ENCODE measurements at regions of chr2 and their contacts with region 1.

Region 1: DNA sequence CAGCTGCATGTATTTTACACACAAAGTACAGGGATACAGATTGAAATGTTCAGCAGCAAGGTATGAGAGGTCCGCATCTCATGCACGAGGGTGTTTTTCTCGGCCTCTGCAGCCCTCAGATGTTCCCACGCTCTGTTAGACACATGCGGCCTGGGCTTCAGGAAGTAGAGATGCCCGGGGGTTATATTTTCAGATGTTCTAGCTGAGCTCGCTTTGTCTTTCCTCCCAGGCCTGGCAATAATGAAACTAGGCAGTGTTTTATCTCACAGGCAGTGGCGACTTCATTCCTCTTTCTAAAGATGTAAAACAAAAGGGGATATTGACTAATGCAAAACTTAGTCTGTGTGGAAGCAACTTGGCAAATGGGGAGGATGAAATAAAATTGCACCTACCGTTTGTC is 190.7 kb downstream of the GBX2 start:
- DNase-seq: no peak
- H3K4me3 ChIP-seq: no peak overlapping the region
- H3K27ac ChIP-seq: no peak overlapping the region
- H3K4me1 ChIP-seq: no peaks in the 10 kb centered on the region
- H3K27me3 ChIP-seq: no peaks in the 10 kb centered on the region
- CTCF ChIP-seq: no peak
- EP300 ChIP-seq: no peak
- POLR2A ChIP-seq: no peak
- RAD21 ChIP-seq: no peak

Region 2: GRCh38 chr2:235988271-235989015 is 11.0 kb after region 1 on chr2:
- CTCF ChIA-PET with region 1: interaction called, 15 read pairs
- POLR2A ChIA-PET with region 1: interaction called, 3 read pairs
- DNase-seq: no peak
- H3K4me3 ChIP-seq: no peak overlapping the region
- H3K27ac ChIP-seq: no peak overlapping the region
- H3K4me1 ChIP-seq: peaks cover 0 to 10% (median 5%) of the 10 kb centered on the region in 4 experiments; a peak in 6 of 7 replicates
- H3K27me3 ChIP-seq: no peaks in the 10 kb centered on the region
- CTCF ChIP-seq: no peak
- EP300 ChIP-seq: no peak
- POLR2A ChIP-seq: no peak
- RAD21 ChIP-seq: no peak

Region 3: DNA sequence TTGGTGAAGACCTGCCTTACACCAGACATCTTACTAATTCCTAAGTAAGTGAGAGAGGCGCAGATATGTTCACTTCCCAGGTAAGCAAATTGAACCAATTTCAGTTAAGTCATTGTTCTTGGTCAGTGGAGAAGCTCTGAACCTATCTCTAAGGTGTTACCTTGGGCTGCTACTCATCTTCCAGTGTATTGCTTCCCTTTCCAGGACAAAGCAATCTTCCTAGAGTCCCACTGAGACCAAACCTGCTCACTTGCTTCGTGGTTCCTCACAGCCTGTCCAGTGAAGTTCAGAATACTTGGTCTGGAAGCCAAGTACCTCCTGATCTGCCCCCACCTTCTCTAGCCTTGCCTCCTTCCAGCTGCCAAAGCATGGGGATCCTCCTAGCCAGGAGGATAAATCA is 213.2 kb after region 1 on chr2:
- CTCF ChIA-PET with region 1: no interaction called
- POLR2A ChIA-PET with region 1: no interaction called
- DNase-seq: no peak
- H3K4me3 ChIP-seq: no peak overlapping the region
- H3K27ac ChIP-seq: no peak overlapping the region
- H3K4me1 ChIP-seq: no peaks in the 10 kb centered on the region; a peak in 1 of 7 replicates
- H3K27me3 ChIP-seq: no peaks in the 10 kb centered on the region
- CTCF ChIP-seq: no peak
- EP300 ChIP-seq: no peak
- POLR2A ChIP-seq: no peak
- RAD21 ChIP-seq: no peak